ENCODE measurements at regions of chr7 and their contacts with region 1.

Region 1: DNA sequence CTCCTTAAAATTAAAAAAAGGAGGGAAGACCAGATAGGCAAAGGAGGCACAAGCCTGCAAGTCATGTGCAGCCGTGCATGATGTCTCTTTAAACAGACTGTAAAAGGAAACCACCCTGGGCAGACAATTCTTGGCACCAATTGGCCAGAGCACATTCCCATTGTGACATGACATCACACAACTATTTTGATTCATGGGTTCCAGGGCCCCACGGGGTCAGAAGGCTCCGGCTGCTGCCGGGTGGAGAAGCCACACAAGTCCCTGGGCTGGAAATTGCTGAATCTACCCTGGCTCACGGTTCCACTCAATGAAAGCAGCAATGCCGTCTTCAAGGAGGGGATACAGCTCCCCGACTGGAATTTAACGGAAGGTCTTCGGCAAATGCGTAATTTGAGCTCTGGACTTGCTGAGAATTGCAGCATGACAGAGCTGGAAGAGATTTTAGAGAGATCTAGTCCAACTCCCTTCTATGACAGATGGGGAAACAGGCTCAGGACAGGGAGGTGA is 140.5 kb downstream of the PRKAG2 start:
- DNase-seq: no peak
- ATAC-seq: no peak
- H3K4me3 Mint-ChIP-seq: no peak overlapping the region
- H3K27ac Mint-ChIP-seq: no peak overlapping the region
- H3K4me1 Mint-ChIP-seq: peaks cover 14% of the 10 kb centered on the region
- H3K27me3 Mint-ChIP-seq: no peaks in the 10 kb centered on the region
- CTCF ChIP-seq: no peak

Region 2: DNA sequence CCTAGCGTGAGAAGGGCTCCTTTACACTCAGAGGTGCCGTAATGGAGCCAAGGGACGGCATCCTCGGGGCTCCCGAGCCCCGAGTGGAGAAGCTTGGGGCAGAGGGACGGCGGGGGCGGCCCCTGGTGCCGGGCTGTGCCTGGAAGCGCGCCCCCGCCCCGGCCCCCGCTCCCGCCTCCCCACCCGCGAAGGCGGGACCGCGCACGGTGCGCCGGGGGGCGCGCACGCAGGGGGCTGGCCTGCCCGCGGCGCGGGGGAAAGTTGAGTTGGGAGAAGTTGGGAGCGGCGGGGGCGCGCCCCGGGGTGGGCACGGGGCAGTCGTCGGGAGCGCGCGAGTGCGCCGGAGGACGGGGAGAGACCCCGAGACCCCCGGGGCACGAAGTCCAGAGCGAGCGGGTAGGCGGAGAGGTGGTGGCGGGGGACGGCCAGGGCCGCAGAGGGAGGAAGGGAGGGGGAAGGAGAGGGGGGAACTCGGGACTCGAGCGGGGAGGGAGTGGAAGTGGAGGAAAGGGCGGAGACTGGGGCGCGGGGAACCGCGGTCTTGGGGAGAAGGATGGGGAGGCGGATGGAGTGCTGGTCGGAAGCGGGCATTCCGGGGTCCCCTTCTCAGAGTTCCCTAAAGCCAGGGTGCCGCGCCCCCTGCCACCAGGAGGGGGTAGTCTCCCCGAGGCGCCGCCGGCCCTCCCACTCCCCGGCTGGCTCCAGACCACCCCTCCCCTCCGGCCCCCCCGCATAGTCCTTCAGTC is 676.9 kb before region 1 on chr7 and contains the start of gene SLC4A2:
- CTCF ChIA-PET with region 1: no interaction called
- POLR2A ChIA-PET with region 1: no interaction called
- intact Hi-C with region 1: no loop called
- DNase-seq: peak; percentile 89
- ATAC-seq: peak; percentile 26
- H3K4me3 Mint-ChIP-seq: peak within 1 kb of the TSS; percentile 92
- H3K27ac Mint-ChIP-seq: peak within 1 kb of the TSS; percentile 89
- H3K4me1 Mint-ChIP-seq: peaks cover 36% of the 10 kb centered on the region
- H3K27me3 Mint-ChIP-seq: no peaks in the 10 kb centered on the region
- CTCF ChIP-seq: no peak
- total RNA-seq, gene SLC4A2: 69.1 and 72.5 TPM in 2 replicates

Region 3: DNA sequence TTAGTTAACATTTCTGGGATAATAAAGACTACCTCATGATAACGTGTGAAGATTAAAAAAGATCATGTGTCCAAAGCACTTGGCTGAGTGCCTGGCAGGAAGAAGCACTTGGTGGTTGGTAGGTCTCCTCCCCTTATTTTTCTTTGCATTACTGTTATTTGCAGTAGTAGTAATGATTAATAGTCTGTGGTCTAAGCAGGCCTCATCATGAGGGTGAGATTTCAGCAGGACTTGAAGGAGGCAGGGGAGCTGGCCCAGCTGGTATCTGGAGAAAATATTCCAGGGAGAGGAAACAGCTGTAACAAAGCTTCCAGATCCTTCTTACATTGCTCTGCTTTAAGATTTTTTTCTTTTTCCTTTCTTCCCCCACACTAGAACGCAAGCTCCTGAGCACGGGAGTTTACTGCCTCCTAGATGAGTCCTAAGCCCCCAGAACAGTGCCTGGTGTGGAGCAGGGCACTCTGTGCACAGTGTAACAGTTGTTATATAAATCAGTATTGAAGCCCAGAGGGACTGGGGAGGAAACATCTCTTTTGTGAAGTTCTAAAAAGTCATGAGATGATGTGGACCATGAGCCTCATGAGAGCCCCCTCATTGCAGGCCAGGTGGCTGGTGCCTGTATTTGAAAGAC is 185.7 kb before region 1 on chr7:
- CTCF ChIA-PET with region 1: no interaction called
- POLR2A ChIA-PET with region 1: no interaction called
- intact Hi-C with region 1: no loop called
- DNase-seq: no peak
- ATAC-seq: no peak
- H3K4me3 Mint-ChIP-seq: no peak overlapping the region
- H3K27ac Mint-ChIP-seq: no peak overlapping the region
- H3K4me1 Mint-ChIP-seq: no peaks in the 10 kb centered on the region
- H3K27me3 Mint-ChIP-seq: peaks cover 16% of the 10 kb centered on the region
- CTCF ChIP-seq: no peak

Region 4: DNA sequence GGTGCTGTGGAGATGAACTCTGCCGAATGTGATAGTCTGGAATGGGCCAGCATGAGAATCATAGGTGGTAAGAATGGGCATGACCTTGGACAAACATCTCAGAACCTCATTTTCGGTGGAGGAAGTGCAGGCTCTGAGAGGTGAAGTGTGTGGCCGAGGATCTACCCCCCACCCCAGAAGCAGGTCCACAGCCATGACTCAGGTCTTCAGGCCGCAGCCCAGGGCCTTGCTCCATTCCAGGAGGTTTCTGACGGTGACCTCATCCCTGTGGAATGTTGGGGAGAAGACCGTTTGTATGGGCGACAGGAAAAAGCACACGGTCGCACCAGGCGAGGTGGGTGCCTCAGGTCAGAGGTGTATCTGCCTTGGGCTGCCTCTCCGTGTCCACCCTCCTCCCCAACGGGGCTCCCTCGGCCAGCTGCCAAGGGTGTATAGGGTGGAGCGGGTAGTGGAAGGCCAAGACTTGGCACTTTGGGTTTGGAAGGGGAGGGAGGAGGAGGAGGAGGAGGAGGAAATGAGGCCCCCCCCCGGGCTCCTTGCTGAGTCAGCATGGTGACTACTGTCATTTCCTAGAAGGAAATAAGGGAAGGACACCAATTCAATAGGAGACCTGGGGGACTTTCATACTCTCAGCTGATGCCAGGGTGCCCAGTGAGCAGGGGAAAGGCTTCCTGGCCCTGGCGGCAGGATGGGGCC is 48.8 kb before region 1 on chr7:
- CTCF ChIA-PET with region 1: no interaction called
- POLR2A ChIA-PET with region 1: no interaction called
- intact Hi-C with region 1: loop called (anchors 5 kb)
- DNase-seq: no peak
- ATAC-seq: no peak
- H3K4me3 Mint-ChIP-seq: no peak overlapping the region
- H3K27ac Mint-ChIP-seq: no peak overlapping the region
- H3K4me1 Mint-ChIP-seq: no peaks in the 10 kb centered on the region
- H3K27me3 Mint-ChIP-seq: no peaks in the 10 kb centered on the region
- CTCF ChIP-seq: no peak

Region 5: GRCh38 chr7:151769188-151769841 is 32.9 kb after region 1 on chr7:
- CTCF ChIA-PET with region 1: no interaction called
- POLR2A ChIA-PET with region 1: no interaction called
- intact Hi-C with region 1: no loop called
- DNase-seq: no peak
- ATAC-seq: no peak
- H3K4me3 Mint-ChIP-seq: no peak overlapping the region
- H3K27ac Mint-ChIP-seq: no peak overlapping the region
- H3K4me1 Mint-ChIP-seq: peaks cover 4% of the 10 kb centered on the region
- H3K27me3 Mint-ChIP-seq: no peaks in the 10 kb centered on the region
- CTCF ChIP-seq: no peak

Region 6: DNA sequence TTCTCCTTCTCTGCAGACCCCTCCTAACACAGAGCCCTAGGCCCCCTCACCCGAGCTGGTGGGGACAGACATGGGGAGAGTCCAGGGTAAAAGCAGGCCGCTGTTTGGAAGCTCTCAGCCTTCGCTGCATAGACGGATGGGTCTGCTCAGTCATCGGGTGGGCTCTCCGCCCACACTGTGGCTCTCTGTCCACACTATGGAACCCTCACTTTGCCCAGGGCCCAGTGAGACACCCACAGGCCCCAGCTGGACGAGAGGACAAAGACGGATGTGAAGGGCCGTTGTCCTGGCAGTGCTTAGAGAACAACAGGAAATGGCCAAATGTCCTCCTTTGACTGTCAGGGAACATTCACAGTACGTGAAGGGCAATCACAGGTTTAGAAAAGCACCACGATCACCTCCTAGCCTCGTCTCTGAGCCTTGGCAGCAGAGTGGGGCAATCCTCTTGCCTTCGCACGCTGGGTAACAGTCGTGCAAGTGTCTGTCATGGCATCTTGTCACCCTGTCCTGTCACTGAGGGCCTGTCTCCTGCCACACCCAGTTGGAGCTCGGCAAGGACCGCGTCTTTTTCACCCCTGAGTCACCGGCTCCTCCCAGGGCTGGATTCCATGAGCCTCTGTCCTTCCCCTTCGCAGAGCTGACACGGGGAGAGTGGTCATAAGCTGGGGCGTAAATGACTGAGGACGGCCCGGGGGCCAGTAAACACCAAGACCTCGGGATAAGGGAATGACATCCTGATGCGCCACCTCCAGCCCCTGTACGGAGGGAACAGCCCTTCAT is 59.8 kb after region 1 on chr7:
- CTCF ChIA-PET with region 1: no interaction called
- POLR2A ChIA-PET with region 1: no interaction called
- intact Hi-C with region 1: no loop called
- DNase-seq: no peak
- ATAC-seq: no peak
- H3K4me3 Mint-ChIP-seq: no peak overlapping the region
- H3K27ac Mint-ChIP-seq: no peak overlapping the region
- H3K4me1 Mint-ChIP-seq: peaks cover 26% of the 10 kb centered on the region
- H3K27me3 Mint-ChIP-seq: no peaks in the 10 kb centered on the region
- CTCF ChIP-seq: no peak